ENCODE measurements at regions of chr15 and their contacts with region 1.

Region 1: GRCh38 chr15:68304589-68305337 is 27.2 kb downstream of the FEM1B start:
- DNase-seq: no peak
- H3K4me3 ChIP-seq: no peak overlapping the region
- H3K27ac ChIP-seq: no peak overlapping the region
- H3K4me1 ChIP-seq: no peaks in the 10 kb centered on the region
- H3K27me3 ChIP-seq: no peaks in the 10 kb centered on the region
- CTCF ChIP-seq: no peak
- POLR2A ChIP-seq: no peak

Region 2: GRCh38 chr15:68252925-68253534 is 51.7 kb before region 1 on chr15:
- intact Hi-C with region 1: loop called (anchors 5 kb)
- DNase-seq: peak; percentile 54
- H3K4me3 ChIP-seq: no peak overlapping the region
- H3K27ac ChIP-seq: no peak overlapping the region
- H3K4me1 ChIP-seq: no peaks in the 10 kb centered on the region
- H3K27me3 ChIP-seq: no peaks in the 10 kb centered on the region
- CTCF ChIP-seq: peak; percentile 30 to 90 (median 80)
- POLR2A ChIP-seq: no peak

Region 3: GRCh38 chr15:68383161-68384074 is 78.7 kb after region 1 on chr15:
- intact Hi-C with region 1: loop called (anchors 2 kb)
- DNase-seq: peak; percentile 44
- H3K4me3 ChIP-seq: no peak overlapping the region
- H3K27ac ChIP-seq: peak overlapping the region in 1 of 2 donors; percentile 33
- H3K4me1 ChIP-seq: no peaks in the 10 kb centered on the region
- H3K27me3 ChIP-seq: no peaks in the 10 kb centered on the region
- CTCF ChIP-seq: peak; percentile 61 to 80 (median 70)
- POLR2A ChIP-seq: no peak

Region 4: DNA sequence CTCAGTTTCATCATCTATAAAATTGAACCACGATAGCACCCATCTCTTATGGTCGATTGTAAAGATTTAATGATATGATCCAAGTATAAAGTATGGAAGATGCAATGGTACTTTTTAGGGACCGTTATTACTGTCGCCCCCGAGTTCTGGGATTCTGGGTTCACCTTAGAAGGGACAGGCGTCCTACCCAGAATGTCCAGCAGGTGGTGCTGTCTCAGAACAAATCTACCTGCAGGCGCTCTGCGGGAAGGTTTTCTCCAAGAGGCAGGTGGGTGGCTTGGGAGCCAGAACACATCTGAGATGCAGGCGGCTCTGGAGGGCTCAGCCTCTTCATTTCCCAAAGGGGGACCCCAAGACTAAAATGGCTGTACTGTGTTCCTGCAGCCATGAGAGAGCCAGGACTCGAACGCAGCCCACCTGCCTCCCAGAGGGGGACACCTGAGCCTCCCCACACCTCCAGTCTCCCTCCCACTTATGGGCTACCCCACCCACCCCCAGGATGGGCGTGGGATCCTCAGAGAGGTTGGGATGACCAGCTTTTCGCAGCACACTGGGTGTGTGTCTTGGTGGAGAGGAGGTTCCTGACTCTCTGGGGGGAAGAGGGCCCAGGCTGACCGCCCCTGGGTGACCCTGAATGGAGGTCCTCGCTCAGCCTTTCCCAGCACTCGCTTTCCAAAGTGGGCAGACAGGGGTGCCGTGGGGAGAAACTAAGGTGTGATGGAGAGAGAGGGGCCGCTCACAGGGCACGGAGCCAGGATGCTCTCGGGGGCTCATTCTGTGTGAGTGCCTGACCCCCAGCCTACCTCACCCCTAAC is 245.9 kb after region 1 on chr15:
- intact Hi-C with region 1: loop called (anchors 5 kb)
- DNase-seq: peak; percentile 68
- H3K4me3 ChIP-seq: no peak overlapping the region
- H3K27ac ChIP-seq: no peak overlapping the region
- H3K4me1 ChIP-seq: no peaks in the 10 kb centered on the region
- H3K27me3 ChIP-seq: no peaks in the 10 kb centered on the region
- CTCF ChIP-seq: peak; percentile 81 to 91 (median 84)
- POLR2A ChIP-seq: no peak

Region 5: GRCh38 chr15:69074001-69074842 is 769.5 kb after region 1 on chr15:
- intact Hi-C with region 1: no loop called
- DNase-seq: peak; percentile 51
- H3K4me3 ChIP-seq: peak overlapping the region; percentile 37 to 41
- H3K27ac ChIP-seq: no peak overlapping the region
- H3K4me1 ChIP-seq: no peaks in the 10 kb centered on the region
- H3K27me3 ChIP-seq: no peaks in the 10 kb centered on the region
- CTCF ChIP-seq: peak in 1 of 4 experiments; percentile 3
- POLR2A ChIP-seq: no peak

Measured in prostate gland (tissue), 2 donors.